Activated CD4-positive, alpha-beta T cell treated with anti-CD3 and anti-CD28 coated beads for 36 hours (primary cell): ENCODE measurements at regions of chr1 and their contacts with region 1.

Region 1: DNA sequence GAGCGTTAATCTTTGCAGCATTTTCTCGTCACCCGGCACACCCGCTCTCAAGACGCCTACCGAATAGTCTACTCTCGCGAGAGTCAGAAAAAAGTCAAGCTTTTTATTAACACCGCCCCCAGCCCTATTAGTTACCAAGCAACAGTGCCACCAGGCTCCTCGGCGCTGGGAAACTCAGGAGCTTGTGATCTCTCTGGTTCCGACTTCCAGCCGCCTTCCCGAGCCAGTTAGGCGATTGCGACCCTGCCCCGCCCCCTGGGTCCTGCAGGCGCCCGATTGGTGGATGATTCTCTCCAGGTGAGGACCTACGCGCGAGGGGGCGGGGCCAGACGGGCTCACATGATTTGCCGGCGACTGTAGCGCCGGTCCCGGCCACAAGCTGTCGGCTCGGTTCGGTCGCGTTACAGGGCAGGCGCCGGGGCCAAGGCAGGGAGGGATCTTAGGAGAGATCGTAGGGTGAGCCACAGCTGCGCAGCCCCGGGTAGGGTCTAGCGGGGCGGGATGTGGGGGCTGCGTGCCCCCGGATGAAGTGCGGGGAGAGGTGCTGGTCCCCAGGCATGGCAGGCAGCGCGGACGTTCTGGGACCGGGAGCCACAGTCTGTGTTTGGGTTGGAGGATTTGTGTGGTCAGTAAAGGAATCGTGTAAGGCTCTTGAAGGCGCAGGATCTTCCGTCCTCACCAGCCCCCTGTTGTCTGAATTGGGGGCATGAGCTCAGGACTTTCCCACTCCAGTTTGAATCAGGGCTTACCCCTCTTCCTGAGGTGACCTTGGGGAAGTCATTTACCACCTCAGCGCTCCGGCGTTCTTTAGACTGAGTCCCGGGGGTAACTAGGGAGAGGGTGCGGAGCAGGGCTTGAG is at the start of gene PFKFB2:
- DNase-seq: peak; percentile 96
- ATAC-seq: peak; percentile 83
- H3K4me3 Mint-ChIP-seq: peak within 1 kb of the TSS; percentile 99
- H3K27ac Mint-ChIP-seq: peak within 1 kb of the TSS; percentile 89
- H3K4me1 Mint-ChIP-seq: peaks cover 39% of the 10 kb centered on the region
- H3K27me3 Mint-ChIP-seq: no peaks in the 10 kb centered on the region
- total RNA-seq, gene PFKFB2: 3.1 to 3.5 TPM

Region 2: GRCh38 chr1:207128336-207128921 is 75.3 kb after region 1 on chr1:
- CTCF ChIA-PET with region 1: no interaction called
- POLR2A ChIA-PET with region 1: no interaction called
- intact Hi-C with region 1: no loop called
- DNase-seq: no peak
- ATAC-seq: no peak
- H3K4me3 Mint-ChIP-seq: no peak overlapping the region
- H3K27ac Mint-ChIP-seq: no peak overlapping the region
- H3K4me1 Mint-ChIP-seq: no peaks in the 10 kb centered on the region
- H3K27me3 Mint-ChIP-seq: peaks cover 5% of the 10 kb centered on the region

Region 3: GRCh38 chr1:207355060-207355459 is 301.9 kb after region 1 on chr1:
- CTCF ChIA-PET with region 1: no interaction called
- POLR2A ChIA-PET with region 1: no interaction called
- intact Hi-C with region 1: no loop called
- DNase-seq: no peak
- ATAC-seq: no peak
- H3K4me3 Mint-ChIP-seq: no peak overlapping the region
- H3K27ac Mint-ChIP-seq: no peak overlapping the region
- H3K4me1 Mint-ChIP-seq: peaks cover 37% of the 10 kb centered on the region
- H3K27me3 Mint-ChIP-seq: no peaks in the 10 kb centered on the region

Region 4: DNA sequence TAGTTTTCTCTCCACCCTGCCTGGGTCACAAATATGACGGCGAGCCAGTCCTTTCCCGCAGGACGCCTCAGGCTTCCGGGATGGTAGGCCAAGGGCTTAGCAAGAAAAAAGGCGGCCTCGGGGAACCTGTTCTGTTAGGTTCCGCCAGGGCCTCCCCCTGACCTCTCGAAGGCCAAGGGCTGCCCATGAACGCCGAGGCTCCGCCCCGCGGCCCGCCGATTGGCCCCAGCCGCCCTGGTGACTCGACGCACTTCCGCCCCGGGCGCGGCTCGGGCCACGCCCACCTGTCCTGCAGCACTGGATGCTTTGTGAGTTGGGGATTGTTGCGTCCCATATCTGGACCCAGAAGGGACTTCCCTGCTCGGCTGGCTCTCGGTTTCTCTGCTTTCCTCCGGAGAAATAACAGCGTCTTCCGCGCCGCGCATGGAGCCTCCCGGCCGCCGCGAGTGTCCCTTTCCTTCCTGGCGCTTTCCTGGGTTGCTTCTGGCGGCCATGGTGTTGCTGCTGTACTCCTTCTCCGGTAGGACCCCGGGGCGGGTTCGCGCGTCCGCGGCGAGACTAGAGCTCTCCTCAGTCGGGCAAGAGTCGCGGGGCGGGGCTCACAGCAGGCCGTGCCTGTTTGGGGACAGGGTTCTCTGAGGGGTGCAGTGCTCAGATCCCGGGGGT is 698.8 kb after region 1 on chr1 and contains the start of gene CD46:
- CTCF ChIA-PET with region 1: no interaction called
- POLR2A ChIA-PET with region 1: no interaction called
- intact Hi-C with region 1: loop called in 1 of 2 experiments (anchors 2 kb)
- DNase-seq: peak; percentile 97
- ATAC-seq: peak; percentile 97
- H3K4me3 Mint-ChIP-seq: peak within 1 kb of the TSS; percentile 99
- H3K27ac Mint-ChIP-seq: peak within 1 kb of the TSS; percentile 97
- H3K4me1 Mint-ChIP-seq: peaks cover 62% of the 10 kb centered on the region
- H3K27me3 Mint-ChIP-seq: no peaks in the 10 kb centered on the region
- total RNA-seq, gene CD46: 92.2 to 92.7 TPM